Sciatic nerve (tissue), 2 donors: ENCODE measurements at regions of chr16 and their contacts with region 1.

Region 1: GRCh38 chr16:25464038-25464437 is 206.4 kb upstream of the ZKSCAN2 start:
- DNase-seq: no peak
- ATAC-seq: no peak

Region 2: DNA sequence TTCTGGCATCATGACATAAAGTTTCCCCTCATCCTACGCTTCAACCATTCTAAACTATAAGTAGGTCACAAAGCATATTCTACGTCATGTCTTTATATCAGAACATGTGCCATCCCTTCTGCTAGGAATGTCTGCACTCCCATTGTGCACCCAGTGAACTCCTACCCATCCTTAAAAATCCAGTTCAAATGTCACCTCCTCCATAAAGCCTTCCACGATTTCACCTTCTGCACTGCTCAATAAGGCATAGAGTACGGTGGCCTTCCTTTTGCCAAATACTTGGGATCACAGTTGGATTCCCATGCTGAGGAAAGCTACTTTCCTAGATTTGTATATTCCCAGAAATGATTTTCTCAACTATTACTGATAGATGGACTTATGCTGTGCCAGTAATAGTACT is 20.0 kb before region 1 on chr16:
- intact Hi-C with region 1: loop called (anchors 1 kb)
- DNase-seq: no peak
- ATAC-seq: no peak